Activated naive CD4-positive, alpha-beta T cell treated with anti-CD3 and anti-CD28 coated beads for 36 hours (primary cell): ENCODE measurements at regions of chr5 and their contacts with region 1.

Region 1: DNA sequence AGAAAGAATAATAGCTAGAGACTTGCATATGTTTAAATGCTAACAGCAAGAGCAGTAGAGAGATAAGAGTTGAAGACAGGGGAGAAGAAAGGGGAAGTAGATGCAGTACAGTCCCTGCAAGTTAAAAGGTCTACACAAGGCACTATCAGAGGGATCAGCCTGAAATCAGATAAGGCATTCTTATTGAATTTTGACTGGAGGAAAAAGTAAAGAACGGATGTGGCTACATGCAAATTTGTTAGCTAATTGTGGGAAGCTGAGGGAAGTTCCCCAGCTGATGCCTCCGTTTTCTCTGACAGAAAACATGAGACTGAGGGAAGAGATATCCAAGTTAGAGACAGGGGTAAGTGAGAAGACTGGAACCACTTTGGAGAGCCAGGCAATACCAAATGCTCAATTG is 12.9 kb upstream of the RHOBTB3 start:
- DNase-seq: peak; percentile 60
- H3K4me3 Mint-ChIP-seq: no peak overlapping the region
- H3K27ac Mint-ChIP-seq: no peak overlapping the region
- H3K4me1 Mint-ChIP-seq: peaks cover 22% of the 10 kb centered on the region
- H3K27me3 Mint-ChIP-seq: peaks cover 11% of the 10 kb centered on the region

Region 2: GRCh38 chr5:95664204-95664786 is 53.9 kb before region 1 on chr5:
- CTCF ChIA-PET with region 1: interaction called, 3 read pairs
- intact Hi-C with region 1: loop called (anchors 5 kb)
- DNase-seq: peak; percentile 63
- H3K4me3 Mint-ChIP-seq: no peak overlapping the region
- H3K27ac Mint-ChIP-seq: no peak overlapping the region
- H3K4me1 Mint-ChIP-seq: no peaks in the 10 kb centered on the region
- H3K27me3 Mint-ChIP-seq: no peaks in the 10 kb centered on the region